CD8-positive, alpha-beta T cell (primary cell): ENCODE measurements at regions of chr19 and their contacts with region 1.

Region 1: DNA sequence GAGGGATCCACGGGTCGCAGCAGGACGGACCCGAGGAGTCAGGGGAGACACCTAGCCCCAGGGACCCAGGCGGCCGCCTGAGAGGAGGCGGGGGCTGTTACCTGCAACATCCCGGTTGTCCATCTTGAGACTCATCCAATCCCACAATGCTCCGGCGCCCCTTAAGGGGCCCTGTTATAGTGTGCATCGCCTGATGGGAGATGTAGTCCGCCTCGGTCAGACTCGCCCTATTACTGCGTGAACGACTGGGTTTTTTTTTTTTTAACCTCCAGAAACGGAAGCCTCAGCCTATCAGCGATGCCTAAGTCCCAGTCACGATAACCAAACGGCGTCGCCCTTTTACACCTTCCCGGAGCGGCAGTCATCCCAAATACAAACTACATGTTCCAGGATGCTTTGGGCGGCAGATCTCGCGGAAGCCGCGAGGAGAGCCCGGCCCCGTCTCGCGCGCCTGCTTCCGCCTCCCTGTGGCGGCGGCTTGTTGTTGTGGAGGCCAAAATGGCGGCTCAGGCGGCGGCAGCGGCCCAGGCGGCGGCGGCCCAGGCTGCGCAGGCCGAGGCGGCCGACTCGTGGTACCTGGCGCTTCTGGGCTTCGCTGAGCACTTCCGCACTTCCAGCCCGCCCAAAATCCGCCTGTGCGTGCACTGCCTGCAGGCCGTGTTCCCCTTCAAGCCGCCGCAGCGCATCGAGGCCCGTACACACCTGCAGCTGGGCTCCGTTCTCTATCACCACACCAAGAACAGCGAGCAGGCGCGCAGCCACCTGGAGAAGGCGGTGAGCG is at the starts of genes MAU2 and SUGP1:
- DNase-seq: peak; percentile 81 to 95 (median 88)
- ATAC-seq: peak; percentile 90
- H3K4me3 ChIP-seq: peak within 1 kb of the TSS; percentile 88 to 94
- H3K4me3 Mint-ChIP-seq: peak within 1 kb of the TSS; percentile 99
- H3K27ac ChIP-seq: peak within 1 kb of the TSS; percentile 88 to 97
- H3K27ac Mint-ChIP-seq: peak within 1 kb of the TSS; percentile 99
- H3K4me1 ChIP-seq: peaks cover 35% of the 10 kb centered on the region
- H3K4me1 Mint-ChIP-seq: peaks cover 40% of the 10 kb centered on the region
- H3K27me3 ChIP-seq: no peaks in the 10 kb centered on the region
- H3K27me3 Mint-ChIP-seq: no peaks in the 10 kb centered on the region
- CTCF ChIP-seq: no peak
- total RNA-seq, gene MAU2: 137 to 139 TPM
- total RNA-seq, gene SUGP1: 60.9 to 68.2 TPM

Region 2: DNA sequence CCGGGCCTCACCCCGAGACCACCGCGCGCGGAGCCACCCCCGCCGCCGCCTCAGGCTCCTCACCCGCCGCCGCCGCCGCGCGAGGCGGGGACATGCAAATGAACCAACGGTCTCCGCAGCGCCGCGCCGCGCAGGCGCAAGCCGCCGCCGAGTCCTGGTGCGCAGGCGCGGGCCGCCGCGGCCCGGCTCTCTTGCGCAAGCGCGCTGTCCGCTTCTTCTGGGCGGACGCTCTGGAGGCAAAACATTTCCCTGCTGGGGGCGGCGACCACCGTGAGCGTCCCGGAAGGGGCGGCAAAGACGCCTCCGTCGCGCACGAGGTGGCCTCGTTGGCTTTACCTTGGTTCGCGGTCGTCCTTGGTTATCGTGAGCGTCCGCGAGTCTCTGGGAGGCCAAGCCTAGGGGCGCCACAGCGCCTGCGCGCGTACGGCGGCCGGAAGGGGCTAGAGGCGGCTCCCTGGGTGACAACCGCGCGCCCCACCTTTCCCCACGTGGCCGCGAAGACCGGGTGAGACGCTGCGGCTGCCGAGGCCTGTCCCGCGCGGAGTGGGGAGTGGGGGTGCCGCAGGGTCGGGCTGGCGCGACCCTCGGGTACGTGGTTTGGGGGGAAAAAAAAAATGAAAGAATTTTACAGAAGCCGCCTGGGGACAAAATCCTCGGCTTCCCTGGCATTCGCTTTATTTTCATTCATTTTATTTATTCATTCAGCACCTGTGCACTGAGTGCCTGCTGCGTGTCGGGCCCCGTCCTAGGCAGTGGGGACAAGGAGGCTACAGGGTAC is 286.9 kb before region 1 on chr19 and contains the starts of genes ARMC6 and SUGP2:
- CTCF ChIA-PET with region 1: no interaction called
- POLR2A ChIA-PET with region 1: no interaction called
- intact Hi-C with region 1: loop called (anchors 10 kb)
- DNase-seq: peak; percentile 79 to 95 (median 89)
- ATAC-seq: peak; percentile 68
- H3K4me3 ChIP-seq: peak within 1 kb of the TSS; percentile 71 to 81
- H3K4me3 Mint-ChIP-seq: peak within 1 kb of the TSS; percentile 97
- H3K27ac ChIP-seq: peak within 1 kb of the TSS; percentile 65 to 85
- H3K27ac Mint-ChIP-seq: peak within 1 kb of the TSS; percentile 97
- H3K4me1 ChIP-seq: peaks cover 18% of the 10 kb centered on the region
- H3K4me1 Mint-ChIP-seq: peaks cover 33% of the 10 kb centered on the region
- H3K27me3 ChIP-seq: no peaks in the 10 kb centered on the region
- H3K27me3 Mint-ChIP-seq: no peaks in the 10 kb centered on the region
- CTCF ChIP-seq: no peak
- total RNA-seq, gene ARMC6: 4.6 to 5.3 TPM
- total RNA-seq, gene SUGP2: 85.4 to 90.8 TPM

Region 3: DNA sequence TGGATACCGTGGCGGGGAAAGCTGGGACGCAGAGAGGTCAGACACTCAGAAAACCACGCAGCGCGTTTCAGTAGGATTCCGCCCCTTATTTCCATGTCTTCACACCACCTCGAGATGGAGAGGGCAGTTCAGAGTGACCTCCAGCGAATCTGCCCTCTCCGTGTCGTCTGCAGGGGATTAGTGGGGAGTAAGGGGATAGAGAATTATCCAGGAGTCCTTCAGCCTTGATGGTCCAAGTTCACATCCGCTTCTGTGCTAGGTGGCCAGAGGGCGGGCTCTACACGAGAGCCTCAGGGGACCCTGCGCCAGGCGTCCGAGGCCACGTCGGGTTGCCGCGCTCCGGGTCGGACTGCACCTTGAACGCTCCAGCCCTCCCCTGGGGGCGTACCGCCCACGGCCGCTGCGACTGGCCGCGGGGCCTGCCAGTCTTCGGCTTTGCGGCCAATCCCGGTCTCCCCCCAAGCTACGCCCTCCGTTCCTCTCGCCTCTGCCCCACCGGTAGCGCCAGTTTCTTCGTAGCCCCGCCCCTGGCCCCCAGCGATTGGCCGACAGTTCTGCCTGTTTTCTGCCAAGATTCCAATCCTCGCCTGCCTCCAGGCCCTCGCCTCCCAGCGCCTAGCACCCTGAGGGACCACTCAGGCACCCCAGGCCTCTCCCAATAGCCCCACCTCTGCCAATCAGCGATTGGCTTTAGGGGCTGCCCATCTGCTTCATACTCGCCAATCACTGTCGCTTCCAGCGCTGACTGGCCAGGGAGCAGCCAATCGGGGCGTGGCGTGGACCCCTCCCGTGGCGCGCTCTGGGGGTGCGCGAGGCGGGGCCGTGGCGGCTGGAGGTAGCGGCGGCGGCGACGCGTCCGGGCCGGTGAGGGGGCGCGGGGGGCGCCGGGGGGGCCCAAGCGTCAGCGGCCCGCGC is 257.1 kb before region 1 on chr19 and contains the start of gene SLC25A42:
- CTCF ChIA-PET with region 1: no interaction called
- POLR2A ChIA-PET with region 1: no interaction called
- intact Hi-C with region 1: loop called in 1 of 2 experiments (anchors 1 kb)
- DNase-seq: peak; percentile 97 to 100 (median 99)
- ATAC-seq: peak; percentile 90
- H3K4me3 ChIP-seq: peak within 1 kb of the TSS; percentile 61 to 87
- H3K4me3 Mint-ChIP-seq: peak within 1 kb of the TSS; percentile 89
- H3K27ac ChIP-seq: peak within 1 kb of the TSS; percentile 47 to 77
- H3K27ac Mint-ChIP-seq: peak within 1 kb of the TSS; percentile 88
- H3K4me1 ChIP-seq: peaks cover 23% of the 10 kb centered on the region
- H3K4me1 Mint-ChIP-seq: peaks cover 32% of the 10 kb centered on the region
- H3K27me3 ChIP-seq: no peaks in the 10 kb centered on the region
- H3K27me3 Mint-ChIP-seq: no peaks in the 10 kb centered on the region
- CTCF ChIP-seq: no peak
- total RNA-seq, gene SLC25A42: 8.3 to 10.6 TPM

Region 4: GRCh38 chr19:19280561-19280960 is 40.0 kb before region 1 on chr19:
- CTCF ChIA-PET with region 1: no interaction called
- POLR2A ChIA-PET with region 1: no interaction called
- intact Hi-C with region 1: no loop called
- DNase-seq: no peak
- ATAC-seq: no peak
- H3K4me3 ChIP-seq: no peak overlapping the region
- H3K4me3 Mint-ChIP-seq: no peak overlapping the region
- H3K27ac ChIP-seq: no peak overlapping the region
- H3K27ac Mint-ChIP-seq: no peak overlapping the region
- H3K4me1 ChIP-seq: no peaks in the 10 kb centered on the region
- H3K4me1 Mint-ChIP-seq: no peaks in the 10 kb centered on the region
- H3K27me3 ChIP-seq: no peaks in the 10 kb centered on the region
- H3K27me3 Mint-ChIP-seq: no peaks in the 10 kb centered on the region
- CTCF ChIP-seq: no peak

Region 5: GRCh38 chr19:19361075-19361594 is 40.6 kb after region 1 on chr19:
- CTCF ChIA-PET with region 1: interaction called, 3 read pairs
- POLR2A ChIA-PET with region 1: no interaction called
- intact Hi-C with region 1: loop called in 1 of 2 experiments (anchors 2 kb)
- DNase-seq: peak; percentile 28 to 88 (median 69)
- ATAC-seq: peak; percentile 64
- H3K4me3 ChIP-seq: no peak overlapping the region
- H3K4me3 Mint-ChIP-seq: peak overlapping the region; percentile 36
- H3K27ac ChIP-seq: no peak overlapping the region
- H3K27ac Mint-ChIP-seq: peak overlapping the region; percentile 23
- H3K4me1 ChIP-seq: peaks cover 27% of the 10 kb centered on the region
- H3K4me1 Mint-ChIP-seq: peaks cover 37% of the 10 kb centered on the region
- H3K27me3 ChIP-seq: no peaks in the 10 kb centered on the region
- H3K27me3 Mint-ChIP-seq: no peaks in the 10 kb centered on the region
- CTCF ChIP-seq: peak; percentile 72

Region 6: GRCh38 chr19:19385108-19385899 is 64.8 kb after region 1 on chr19:
- CTCF ChIA-PET with region 1: no interaction called
- POLR2A ChIA-PET with region 1: no interaction called
- intact Hi-C with region 1: loop called in 1 of 2 experiments (anchors 1 kb)
- DNase-seq: peak; percentile 99 to 100 (median 99)
- ATAC-seq: peak; percentile 86
- H3K4me3 ChIP-seq: peak overlapping the region; percentile 73 to 84
- H3K4me3 Mint-ChIP-seq: peak overlapping the region; percentile 93
- H3K27ac ChIP-seq: peak overlapping the region; percentile 71 to 88
- H3K27ac Mint-ChIP-seq: peak overlapping the region; percentile 92
- H3K4me1 ChIP-seq: peaks cover 45% of the 10 kb centered on the region
- H3K4me1 Mint-ChIP-seq: peaks cover 39% of the 10 kb centered on the region
- H3K27me3 ChIP-seq: no peaks in the 10 kb centered on the region
- H3K27me3 Mint-ChIP-seq: no peaks in the 10 kb centered on the region
- CTCF ChIP-seq: no peak